HepG2 (cell line): ENCODE measurements at regions of chr22 and their contacts with region 1.

Region 1: DNA sequence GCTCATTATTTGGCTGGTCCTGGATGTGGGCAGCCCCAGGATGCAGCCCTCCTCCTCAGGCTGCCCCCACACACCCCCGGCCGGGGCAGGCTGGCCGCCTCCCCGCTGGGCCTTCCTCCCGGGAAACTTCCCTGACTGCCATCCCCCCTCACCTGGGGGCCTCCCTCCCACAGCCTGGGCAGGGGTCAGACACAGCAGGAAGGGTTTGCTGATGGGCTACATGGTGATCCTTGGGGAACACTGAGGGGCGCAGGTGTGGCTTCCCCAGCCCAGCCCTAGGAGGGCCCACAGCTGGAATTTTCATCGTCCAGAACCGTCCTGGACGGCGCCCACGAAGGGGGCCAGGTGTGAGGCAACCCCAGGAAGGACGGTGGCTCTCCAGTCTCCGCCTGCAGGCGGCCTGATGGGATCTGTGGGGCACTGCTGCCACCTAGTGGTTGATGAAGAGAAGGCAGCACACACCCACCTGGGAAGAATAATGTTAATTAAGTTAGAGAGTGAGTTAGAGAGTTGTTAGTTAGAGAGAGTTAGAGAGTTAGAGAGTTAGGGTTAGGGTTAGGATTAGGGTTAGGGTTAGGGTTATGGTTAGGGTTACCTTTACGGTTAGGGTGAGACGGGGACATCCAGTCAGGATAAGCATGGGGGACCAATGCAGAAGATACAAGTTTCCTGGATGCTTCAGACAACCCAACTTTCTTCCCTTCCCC is 75.9 kb upstream of the PRR5 start:
- DNase-seq: peak; percentile 51
- ATAC-seq: peak; percentile 81
- H3K4me3 ChIP-seq: no peak overlapping the region
- H3K27ac ChIP-seq: no peak overlapping the region
- H3K4me1 ChIP-seq: no peaks in the 10 kb centered on the region
- H3K27me3 ChIP-seq: peaks cover 1 to 24% of the 10 kb centered on the region in 2 experiments
- CTCF ChIP-seq: peak; percentile 95
- EP300 ChIP-seq: no peak
- POLR2A ChIP-seq: no peak
- RAD21 ChIP-seq: peak; percentile 95

Region 2: GRCh38 chr22:43884600-43885325 is 741.4 kb before region 1 on chr22:
- CTCF ChIA-PET with region 1: no interaction called
- POLR2A ChIA-PET with region 1: no interaction called
- in situ Hi-C with region 1: loop called (anchors 25 kb)
- intact Hi-C with region 1: no loop called
- DNase-seq: no peak
- ATAC-seq: peak; percentile 54
- H3K4me3 ChIP-seq: no peak overlapping the region
- H3K27ac ChIP-seq: no peak overlapping the region
- H3K4me1 ChIP-seq: no peaks in the 10 kb centered on the region
- H3K27me3 ChIP-seq: no peaks in the 10 kb centered on the region; a peak in 2 of 5 replicates
- CTCF ChIP-seq: peak; percentile 74
- EP300 ChIP-seq: no peak
- POLR2A ChIP-seq: no peak
- RAD21 ChIP-seq: no peak

Region 3: GRCh38 chr22:43993027-43993760 is 632.9 kb before region 1 on chr22:
- CTCF ChIA-PET with region 1: interaction called, 27 read pairs
- POLR2A ChIA-PET with region 1: no interaction called
- in situ Hi-C with region 1: loop called (anchors 5 kb)
- intact Hi-C with region 1: loop called (anchors 1 kb)
- DNase-seq: peak; percentile 34
- ATAC-seq: peak; percentile 91
- H3K4me3 ChIP-seq: no peak overlapping the region
- H3K27ac ChIP-seq: no peak overlapping the region
- H3K4me1 ChIP-seq: peaks cover 7% of the 10 kb centered on the region
- H3K27me3 ChIP-seq: no peaks in the 10 kb centered on the region
- CTCF ChIP-seq: peak; percentile 85
- EP300 ChIP-seq: no peak
- POLR2A ChIP-seq: no peak
- RAD21 ChIP-seq: peak; percentile 59

Region 4: DNA sequence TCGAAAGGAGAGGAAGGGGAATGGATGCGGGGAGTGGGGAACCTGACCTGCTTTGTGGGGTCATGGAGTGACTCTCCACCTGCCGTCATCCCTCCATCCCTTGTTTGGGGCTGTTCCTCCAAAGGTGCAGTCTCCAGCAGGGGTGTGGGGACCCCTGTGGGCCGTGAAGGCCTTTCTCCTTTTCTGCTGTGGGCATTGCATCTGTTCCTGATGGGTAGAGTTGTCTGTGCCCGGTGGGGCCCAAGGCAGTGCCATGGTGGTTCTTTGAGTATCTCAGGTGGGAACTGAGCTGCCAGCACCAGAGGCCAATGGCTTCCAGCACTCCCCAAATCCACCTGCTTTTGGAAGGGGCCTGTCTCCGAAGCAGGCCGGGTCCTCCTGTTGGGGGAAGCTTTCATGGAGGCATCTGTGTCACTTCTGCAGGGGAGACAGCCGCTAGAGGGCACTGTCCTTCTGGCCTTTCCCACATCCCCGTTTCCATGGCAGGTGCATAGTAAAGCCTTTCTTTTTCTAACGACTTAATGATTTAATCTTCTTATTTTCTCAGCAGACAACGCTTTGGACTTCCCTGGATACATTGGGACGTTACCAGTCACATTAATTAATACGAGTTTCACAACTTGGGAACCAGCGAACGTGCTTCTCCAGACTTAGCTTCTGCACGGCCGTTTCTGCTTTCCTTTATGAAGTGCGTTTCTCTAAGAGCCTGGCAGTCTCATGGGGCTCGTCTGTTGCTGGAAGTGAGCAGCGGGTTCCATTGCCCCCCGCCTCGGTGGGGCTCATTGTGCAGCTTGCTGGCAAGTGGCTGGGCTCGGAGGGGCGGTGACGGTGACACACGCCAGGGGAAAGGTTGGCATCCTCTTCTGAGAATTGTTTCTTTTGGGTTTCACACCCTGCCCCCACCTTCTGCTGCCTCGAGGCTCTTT is 544.9 kb before region 1 on chr22:
- CTCF ChIA-PET with region 1: interaction called, 10 read pairs
- POLR2A ChIA-PET with region 1: no interaction called
- in situ Hi-C with region 1: loop called (anchors 5 kb)
- intact Hi-C with region 1: loop called (anchors 1 kb)
- DNase-seq: peak; percentile 39
- ATAC-seq: peak; percentile 66
- H3K4me3 ChIP-seq: no peak overlapping the region
- H3K27ac ChIP-seq: no peak overlapping the region
- H3K4me1 ChIP-seq: no peaks in the 10 kb centered on the region
- H3K27me3 ChIP-seq: peaks cover 1 to 20% of the 10 kb centered on the region in 2 experiments; a peak in 2 of 5 replicates
- CTCF ChIP-seq: peak; percentile 75
- EP300 ChIP-seq: no peak
- POLR2A ChIP-seq: no peak
- RAD21 ChIP-seq: no peak

Region 5: GRCh38 chr22:44351685-44352377 is 274.3 kb before region 1 on chr22:
- CTCF ChIA-PET with region 1: no interaction called
- POLR2A ChIA-PET with region 1: no interaction called
- in situ Hi-C with region 1: loop called (anchors 10 kb)
- intact Hi-C with region 1: no loop called
- DNase-seq: no peak
- ATAC-seq: no peak
- H3K4me3 ChIP-seq: no peak overlapping the region
- H3K27ac ChIP-seq: no peak overlapping the region
- H3K4me1 ChIP-seq: no peaks in the 10 kb centered on the region
- H3K27me3 ChIP-seq: peaks cover 1 to 40% of the 10 kb centered on the region in 2 experiments; a peak in 4 of 5 replicates
- CTCF ChIP-seq: no peak
- EP300 ChIP-seq: no peak
- POLR2A ChIP-seq: no peak
- RAD21 ChIP-seq: no peak

Region 6: DNA sequence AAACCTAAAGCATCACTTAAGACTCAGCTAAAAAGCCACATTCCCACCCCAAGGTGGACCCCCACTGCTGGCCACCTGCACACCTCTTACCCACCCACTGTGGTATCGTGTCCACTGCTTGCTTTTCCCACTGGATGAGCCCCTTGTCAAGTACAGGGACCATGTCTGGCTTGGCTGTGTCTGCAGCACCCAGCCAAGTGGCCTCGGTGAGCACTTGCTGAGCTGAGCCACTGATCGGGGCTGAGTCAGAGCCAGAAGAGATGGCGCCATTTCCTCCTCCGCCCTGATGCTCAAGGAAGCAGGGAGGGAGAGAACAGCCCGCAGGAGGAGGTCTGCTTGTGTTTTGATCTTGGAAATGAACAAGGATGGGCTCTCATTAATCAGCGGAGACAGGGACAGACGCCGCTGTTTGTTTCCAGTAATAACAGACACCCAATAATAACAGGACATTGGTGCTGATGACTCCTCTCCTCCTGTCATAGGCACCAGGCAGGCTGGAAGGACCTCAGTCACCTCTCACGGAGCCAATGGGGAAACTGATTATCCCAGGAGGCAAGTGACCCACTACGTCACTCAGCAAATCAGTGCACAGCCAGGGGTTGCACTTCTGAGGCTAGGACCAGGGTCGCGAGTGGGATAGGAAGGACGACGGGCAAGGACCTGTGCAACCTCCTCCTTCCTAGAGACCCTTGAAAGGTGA is 42.9 kb before region 1 on chr22:
- CTCF ChIA-PET with region 1: no interaction called
- POLR2A ChIA-PET with region 1: no interaction called
- in situ Hi-C with region 1: no loop called
- intact Hi-C with region 1: no loop called
- DNase-seq: no peak
- ATAC-seq: no peak
- H3K4me3 ChIP-seq: no peak overlapping the region
- H3K27ac ChIP-seq: no peak overlapping the region
- H3K4me1 ChIP-seq: no peaks in the 10 kb centered on the region
- H3K27me3 ChIP-seq: peaks cover 6 to 66% of the 10 kb centered on the region in 2 experiments; a peak in 4 of 5 replicates
- CTCF ChIP-seq: no peak
- EP300 ChIP-seq: no peak
- POLR2A ChIP-seq: no peak
- RAD21 ChIP-seq: no peak

Region 7: DNA sequence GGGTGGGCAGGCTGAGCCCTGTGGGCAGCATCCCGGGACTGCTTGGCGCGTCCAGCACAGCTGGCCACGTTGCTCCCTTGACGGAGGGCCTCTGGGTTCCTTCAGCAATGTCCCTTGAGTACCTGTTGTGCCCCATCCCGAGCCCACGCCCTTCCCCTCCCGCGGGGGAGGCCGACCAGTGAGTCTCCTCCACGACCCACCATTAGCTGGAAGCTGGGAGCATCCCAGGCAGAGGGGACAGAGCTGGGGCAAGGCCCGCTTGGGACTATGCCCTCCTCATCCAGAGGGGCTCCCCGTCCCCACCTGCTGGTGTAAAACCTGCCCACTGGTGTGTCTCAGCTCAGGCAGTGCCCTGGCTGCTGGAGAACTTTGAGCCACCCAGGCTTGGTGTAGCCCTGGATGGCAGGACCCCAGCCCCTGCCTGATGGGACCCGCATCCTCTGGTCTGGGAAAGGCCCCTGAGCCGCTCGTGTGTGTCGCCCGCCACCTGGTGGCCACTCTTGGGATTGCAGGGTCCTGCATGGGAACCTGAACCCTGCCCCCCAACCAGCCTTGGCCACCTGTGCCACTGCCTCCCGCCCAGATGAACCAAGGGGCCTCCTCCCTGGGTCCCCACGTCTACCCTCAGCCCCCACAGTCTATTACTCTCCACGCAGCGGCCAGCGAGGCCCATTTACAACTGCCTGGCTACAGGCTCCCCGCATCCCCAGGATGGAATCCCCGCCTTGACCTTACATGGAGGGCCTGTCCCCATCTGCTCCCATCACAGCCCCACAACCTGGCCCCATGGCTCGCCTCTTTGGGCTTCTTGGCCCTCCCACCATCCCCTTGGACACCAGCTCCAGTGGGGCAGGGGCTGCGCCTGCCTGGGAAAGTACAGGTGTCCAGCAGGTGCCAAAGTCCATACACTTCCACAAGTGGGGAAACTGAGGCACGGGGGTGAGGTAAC is 109.7 kb after region 1 on chr22:
- CTCF ChIA-PET with region 1: no interaction called
- POLR2A ChIA-PET with region 1: no interaction called
- in situ Hi-C with region 1: no loop called
- intact Hi-C with region 1: no loop called
- DNase-seq: peak; percentile 44
- ATAC-seq: peak; percentile 60
- H3K4me3 ChIP-seq: no peak overlapping the region
- H3K27ac ChIP-seq: no peak overlapping the region
- H3K4me1 ChIP-seq: peaks cover 37% of the 10 kb centered on the region
- H3K27me3 ChIP-seq: no peaks in the 10 kb centered on the region; a peak in 1 of 5 replicates
- CTCF ChIP-seq: peak; percentile 96
- EP300 ChIP-seq: no peak
- POLR2A ChIP-seq: peak in 1 of 2 experiments; percentile 11; a peak in 2 of 4 replicates
- RAD21 ChIP-seq: peak; percentile 93